ENCODE measurements at regions of chr3 and their contacts with region 1.

Region 1: GRCh38 chr3:73399106-73399505 is 225.6 kb downstream of the PDZRN3 start:
- DNase-seq: no peak
- H3K4me3 ChIP-seq: no peak overlapping the region
- H3K27ac ChIP-seq: peak overlapping the region; percentile 1 to 28
- H3K4me1 ChIP-seq: no peaks in the 10 kb centered on the region
- H3K27me3 ChIP-seq: no peaks in the 10 kb centered on the region
- CTCF ChIP-seq: no peak
- POLR2A ChIP-seq: no peak

Region 2: DNA sequence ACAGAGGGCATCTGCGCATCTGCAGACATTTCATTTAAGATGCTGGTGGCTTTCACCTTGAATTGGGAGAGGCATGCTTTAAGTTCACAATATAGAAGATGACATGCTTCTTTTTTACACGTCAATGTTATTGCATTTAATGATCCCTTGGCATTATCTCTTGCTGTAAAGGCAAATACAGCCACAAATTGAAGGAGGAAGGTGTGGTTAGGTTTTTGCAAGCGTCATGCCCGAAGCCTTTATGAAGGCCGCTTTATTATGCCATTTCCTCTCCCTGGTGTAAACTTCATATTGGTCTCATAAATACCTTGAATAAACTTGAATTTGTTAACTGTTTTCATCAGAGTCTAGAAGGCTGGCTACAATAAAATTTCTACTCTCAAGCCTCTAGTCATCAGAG is 12.9 kb after region 1 on chr3:
- intact Hi-C with region 1: loop called (anchors 2 kb)
- DNase-seq: no peak
- H3K4me3 ChIP-seq: no peak overlapping the region
- H3K27ac ChIP-seq: no peak overlapping the region
- H3K4me1 ChIP-seq: no peaks in the 10 kb centered on the region
- H3K27me3 ChIP-seq: no peaks in the 10 kb centered on the region
- CTCF ChIP-seq: no peak
- POLR2A ChIP-seq: no peak